ENCODE measurements at regions of chr7 and their contacts with region 1.

Region 1: GRCh38 chr7:121366852-121367431 is 29.2 kb downstream of the FAM3C start:
- DNase-seq: peak; percentile 6 to 34
- ATAC-seq: peak in 1 of 2 experiments; percentile 44; a peak in 2 of 6 replicates
- H3K4me3 ChIP-seq: no peak overlapping the region
- H3K27ac ChIP-seq: no peak overlapping the region
- H3K4me1 ChIP-seq: peaks cover 5% of the 10 kb centered on the region; the same call in 2 of the 3 replicates
- CTCF ChIP-seq: peak; percentile 87
- EP300 ChIP-seq: no peak
- POLR2A ChIP-seq: no peak
- RAD21 ChIP-seq: peak; percentile 78 to 86

Region 2: DNA sequence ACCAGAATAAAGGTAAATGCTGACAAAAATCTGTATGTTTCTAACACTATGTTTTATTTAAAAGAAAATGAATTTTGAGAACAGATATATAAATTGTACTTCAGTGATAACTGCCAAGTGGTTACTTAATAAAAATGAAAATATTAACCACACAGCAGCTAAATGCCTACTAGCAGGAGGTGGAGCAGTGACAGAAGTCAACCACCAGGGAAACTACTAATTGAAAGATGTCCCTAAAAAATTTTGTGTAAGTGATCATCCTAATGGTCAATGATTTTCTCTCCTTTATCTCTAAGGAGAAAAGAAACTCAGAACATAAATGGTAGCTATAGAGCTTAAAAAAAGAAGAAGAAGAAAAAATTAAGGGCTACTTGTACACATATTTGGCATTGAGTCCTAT is 15.3 kb before region 1 on chr7:
- CTCF ChIA-PET with region 1: interaction called, 13 read pairs
- POLR2A ChIA-PET with region 1: no interaction called
- DNase-seq: no peak
- ATAC-seq: no peak; a peak in 1 of 6 replicates
- H3K4me3 ChIP-seq: no peak overlapping the region
- H3K27ac ChIP-seq: no peak overlapping the region
- H3K4me1 ChIP-seq: no peaks in the 10 kb centered on the region
- CTCF ChIP-seq: no peak
- EP300 ChIP-seq: no peak
- POLR2A ChIP-seq: no peak
- RAD21 ChIP-seq: no peak

Region 3: DNA sequence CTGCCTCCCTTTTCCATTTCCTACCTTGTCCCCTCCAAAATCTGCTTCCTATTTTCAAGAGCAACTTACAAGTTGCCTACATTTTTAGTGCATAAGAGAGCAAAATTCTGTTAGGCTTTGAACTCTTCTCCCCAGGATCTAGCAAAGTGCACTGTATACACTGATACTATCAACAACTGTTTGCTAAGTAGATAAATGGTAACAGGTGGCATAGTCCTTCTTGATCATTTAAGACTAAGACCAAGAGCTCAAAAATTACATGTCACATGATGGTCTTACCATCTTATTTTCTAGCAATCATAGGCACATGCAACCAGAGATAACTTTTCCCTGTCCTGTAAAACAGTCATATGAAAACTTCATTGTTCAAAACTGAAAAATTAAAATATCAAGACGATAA is 13.0 kb after region 1 on chr7:
- CTCF ChIA-PET with region 1: interaction called, 20 read pairs
- POLR2A ChIA-PET with region 1: no interaction called
- DNase-seq: no peak
- ATAC-seq: no peak
- H3K4me3 ChIP-seq: no peak overlapping the region
- H3K27ac ChIP-seq: no peak overlapping the region
- H3K4me1 ChIP-seq: no peaks in the 10 kb centered on the region
- CTCF ChIP-seq: no peak
- EP300 ChIP-seq: no peak
- POLR2A ChIP-seq: no peak
- RAD21 ChIP-seq: no peak

Region 4: DNA sequence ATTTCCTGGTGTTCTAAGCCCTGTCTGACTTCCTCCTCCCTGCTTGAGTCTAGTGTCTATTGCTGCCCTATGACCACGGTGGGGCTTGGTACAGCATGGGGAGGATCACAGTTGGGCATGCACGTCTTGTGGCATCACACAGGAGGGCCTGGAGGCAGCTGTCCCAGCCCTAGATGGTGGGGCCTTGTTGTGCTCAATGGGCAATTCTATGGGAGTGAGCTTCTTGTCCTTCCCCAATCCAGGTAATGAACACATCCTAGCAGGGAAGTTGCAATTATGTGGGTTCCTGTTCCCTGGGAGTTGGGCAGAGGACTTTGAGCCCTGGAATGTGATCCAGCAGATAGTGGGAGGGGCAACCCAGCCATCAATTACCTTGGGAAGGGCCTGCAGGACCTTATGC is 40.0 kb after region 1 on chr7:
- CTCF ChIA-PET with region 1: interaction called, 11 read pairs
- POLR2A ChIA-PET with region 1: no interaction called
- DNase-seq: no peak
- ATAC-seq: no peak
- H3K4me3 ChIP-seq: no peak overlapping the region
- H3K27ac ChIP-seq: no peak overlapping the region
- H3K4me1 ChIP-seq: no peaks in the 10 kb centered on the region
- CTCF ChIP-seq: no peak
- EP300 ChIP-seq: no peak
- POLR2A ChIP-seq: no peak
- RAD21 ChIP-seq: no peak

Region 5: GRCh38 chr7:121459148-121459547 is 92.2 kb after region 1 on chr7:
- CTCF ChIA-PET with region 1: no interaction called
- POLR2A ChIA-PET with region 1: no interaction called
- DNase-seq: no peak
- ATAC-seq: no peak
- H3K4me3 ChIP-seq: no peak overlapping the region
- H3K27ac ChIP-seq: no peak overlapping the region
- H3K4me1 ChIP-seq: no peaks in the 10 kb centered on the region
- CTCF ChIP-seq: no peak
- EP300 ChIP-seq: no peak
- POLR2A ChIP-seq: no peak
- RAD21 ChIP-seq: no peak

Region 6: DNA sequence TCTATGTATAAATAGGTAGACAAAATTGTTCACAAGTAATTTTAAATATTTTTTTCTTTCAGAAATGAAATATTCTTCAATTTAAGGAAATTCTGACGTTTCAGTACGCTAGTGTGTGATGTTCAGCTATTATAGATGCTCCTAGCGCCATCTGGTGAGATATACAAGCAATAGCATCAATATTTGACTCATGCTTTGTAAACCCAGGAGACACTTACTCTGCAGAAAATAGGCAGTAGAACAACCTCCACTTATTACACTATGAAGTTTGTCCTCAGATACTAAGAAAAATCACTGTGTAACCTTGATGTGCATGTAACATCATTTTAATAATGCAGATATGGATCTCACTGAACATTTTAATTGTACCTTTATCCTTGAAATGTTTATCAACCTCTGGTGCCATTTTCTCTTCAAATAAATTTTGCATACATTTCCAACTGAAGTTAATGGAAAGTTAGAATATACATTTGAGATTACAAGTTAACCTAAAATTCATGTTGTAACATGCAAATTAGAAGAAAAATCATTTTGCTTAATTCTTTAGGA is 180.7 kb after region 1 on chr7:
- CTCF ChIA-PET with region 1: interaction called, 48 read pairs
- POLR2A ChIA-PET with region 1: no interaction called
- DNase-seq: peak; percentile 59 to 66
- ATAC-seq: peak; percentile 91 to 97
- H3K4me3 ChIP-seq: no peak overlapping the region
- H3K27ac ChIP-seq: no peak overlapping the region
- H3K4me1 ChIP-seq: peaks cover 11% of the 10 kb centered on the region; the same call in 2 of the 3 replicates
- CTCF ChIP-seq: peak; percentile 88
- EP300 ChIP-seq: no peak
- POLR2A ChIP-seq: no peak
- RAD21 ChIP-seq: peak; percentile 85 to 89

Measured in A549 (cell line).